Posterior vena cava (tissue), 2 donors: ENCODE measurements at regions of chr18 and their contacts with region 1.

Region 1: DNA sequence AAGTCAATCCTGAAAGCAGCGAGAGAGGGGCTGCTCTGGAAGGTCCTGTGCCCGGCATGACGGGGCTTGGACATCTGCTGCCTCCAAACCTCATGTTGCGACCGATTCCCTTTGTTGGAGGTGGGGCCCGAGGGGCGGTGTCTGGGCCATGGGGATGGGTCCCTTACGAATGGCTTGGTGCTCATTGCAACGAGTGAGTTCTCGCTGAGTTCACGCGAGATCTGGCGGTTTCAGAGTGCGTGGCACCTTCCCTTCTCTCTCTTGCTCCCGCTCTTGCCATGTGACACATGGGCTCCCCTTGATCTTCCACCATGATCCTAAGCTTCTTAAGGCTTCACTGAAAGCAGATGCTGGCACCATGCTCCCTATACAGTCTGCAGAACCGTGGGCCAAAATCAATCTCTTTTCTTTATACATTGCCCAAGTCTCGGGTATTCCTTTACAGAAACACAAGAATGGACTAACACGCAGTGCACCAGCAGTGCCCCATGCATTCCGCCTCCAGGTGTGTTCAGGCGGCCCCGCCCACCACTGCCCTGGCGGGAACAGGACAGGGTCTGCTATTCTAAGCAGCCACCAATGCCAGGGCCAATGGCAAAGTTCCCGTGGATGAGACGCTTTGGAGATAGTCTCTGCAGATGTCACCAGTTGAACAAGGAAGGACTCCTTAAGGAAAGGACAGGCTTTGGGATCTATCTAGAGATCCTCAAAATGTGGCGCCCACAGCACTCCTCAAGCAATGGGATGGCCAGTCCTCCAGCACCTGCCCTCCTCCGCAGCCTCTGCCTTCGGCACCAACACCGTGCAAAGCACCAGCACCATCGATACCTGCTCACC is 63.4 kb downstream of the ZNF516 start:
- DNase-seq: no peak

Region 2: GRCh38 chr18:76448256-76449110 is 16.8 kb after region 1 on chr18:
- intact Hi-C with region 1: loop called in 1 of 2 experiments (anchors 2 kb)
- DNase-seq: no peak